Activated CD8-positive, alpha-beta T cell treated with anti-CD3 and anti-CD28 coated beads for 36 hours (primary cell): ENCODE measurements at regions of chr16 and their contacts with region 1.

Region 1: DNA sequence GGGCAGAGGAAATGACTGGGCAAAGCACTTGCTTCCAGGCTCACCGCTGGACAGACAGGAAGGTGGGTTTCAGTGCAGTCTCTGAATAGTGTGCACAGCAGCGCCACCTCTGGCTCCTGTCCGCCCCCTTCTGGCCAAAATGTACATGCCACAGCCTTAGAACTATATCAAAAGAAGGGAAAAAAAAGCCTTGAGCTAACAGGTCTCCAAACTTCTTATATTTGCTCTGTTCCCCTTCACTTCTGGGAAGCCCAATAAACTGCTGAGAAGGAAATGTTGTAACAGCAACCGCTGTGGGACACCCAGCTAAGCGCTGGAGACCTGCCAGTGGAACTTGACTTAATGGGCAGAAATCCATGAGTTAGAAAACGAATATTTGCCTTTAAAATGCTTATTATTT is 17.5 kb downstream of the COG7 start:
- DNase-seq: peak; percentile 85
- ATAC-seq: peak; percentile 94
- H3K4me3 Mint-ChIP-seq: no peak overlapping the region
- H3K27ac Mint-ChIP-seq: no peak overlapping the region
- H3K4me1 Mint-ChIP-seq: peaks cover 2% of the 10 kb centered on the region
- H3K27me3 Mint-ChIP-seq: no peaks in the 10 kb centered on the region
- CTCF ChIP-seq: peak; percentile 82

Region 2: DNA sequence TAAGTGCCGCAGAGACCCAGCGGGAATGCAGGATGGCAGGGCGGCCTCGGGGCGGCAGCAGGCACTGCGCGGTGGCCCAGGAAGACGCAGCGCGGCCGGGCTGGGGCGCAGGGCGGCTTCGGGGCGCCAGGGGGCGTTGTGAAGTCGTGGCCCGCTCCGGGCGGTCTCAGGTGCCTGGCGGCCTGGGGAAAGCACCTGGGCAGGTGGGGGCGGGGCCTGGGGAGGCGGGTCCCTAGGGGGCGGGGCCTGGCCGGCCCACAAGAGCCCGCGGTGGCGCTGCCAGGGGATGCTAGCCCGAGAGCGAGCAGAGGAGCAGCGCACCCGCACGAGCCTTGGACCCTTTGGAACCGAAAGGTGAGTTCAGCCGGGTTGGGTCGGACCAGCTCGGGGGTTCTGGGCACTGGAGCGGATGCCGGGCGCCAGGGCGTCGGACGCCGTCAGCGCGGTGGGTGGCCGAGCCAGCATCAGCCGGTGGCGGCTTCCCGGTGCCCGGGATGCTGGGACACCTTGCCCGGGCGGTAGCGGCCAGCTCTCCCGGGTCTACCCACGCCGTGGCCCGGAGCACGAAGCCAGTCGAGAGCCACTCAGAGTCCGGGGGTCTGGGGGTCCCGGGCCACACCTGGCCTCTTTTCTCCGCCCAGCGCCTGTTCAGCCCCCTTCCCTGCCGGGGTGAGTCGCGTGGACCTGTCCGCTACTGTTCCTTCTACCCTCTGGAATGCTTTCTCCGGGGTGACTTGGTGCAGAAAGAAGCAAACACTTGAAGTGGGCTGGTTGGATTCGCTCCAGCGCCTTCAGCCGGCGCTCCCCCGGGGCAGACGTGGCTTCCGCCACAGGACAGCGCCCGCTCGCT is 252.8 kb before region 1 on chr16 and contains the start of gene SCNN1G:
- CTCF ChIA-PET with region 1: interaction called, 113 read pairs
- POLR2A ChIA-PET with region 1: interaction called, 4 read pairs
- intact Hi-C with region 1: loop called (anchors 5 kb)
- DNase-seq: peak; percentile 82
- ATAC-seq: peak; percentile 100
- H3K4me3 Mint-ChIP-seq: peak within 1 kb of the TSS; percentile 22
- H3K27ac Mint-ChIP-seq: no peak within 1 kb of the TSS
- H3K4me1 Mint-ChIP-seq: peaks cover 7% of the 10 kb centered on the region
- H3K27me3 Mint-ChIP-seq: peaks cover 51% of the 10 kb centered on the region
- CTCF ChIP-seq: peak; percentile 90
- total RNA-seq, gene SCNN1G: not detected

Region 3: DNA sequence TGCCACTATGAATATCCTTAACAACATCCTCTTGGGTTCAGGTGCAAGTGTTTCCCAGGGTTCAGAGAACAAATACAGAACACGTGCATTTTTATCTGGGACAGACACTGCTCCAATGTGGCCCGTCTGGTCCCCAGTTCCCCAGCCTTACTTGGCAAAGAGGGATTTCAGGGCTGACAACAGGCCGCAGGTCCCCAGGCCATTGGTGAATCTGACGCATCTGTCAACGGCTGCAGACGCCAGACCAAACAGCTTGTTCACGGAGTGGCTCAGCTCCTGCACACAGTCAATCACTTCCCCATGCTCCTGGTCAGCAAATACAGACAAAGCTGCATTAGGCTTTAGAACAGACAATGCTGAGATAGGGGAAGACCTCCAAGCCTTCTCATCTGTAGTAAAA is 18.7 kb before region 1 on chr16:
- CTCF ChIA-PET with region 1: interaction called, 33 read pairs
- POLR2A ChIA-PET with region 1: no interaction called
- intact Hi-C with region 1: no loop called
- DNase-seq: no peak
- ATAC-seq: no peak
- H3K4me3 Mint-ChIP-seq: no peak overlapping the region
- H3K27ac Mint-ChIP-seq: no peak overlapping the region
- H3K4me1 Mint-ChIP-seq: no peaks in the 10 kb centered on the region
- H3K27me3 Mint-ChIP-seq: no peaks in the 10 kb centered on the region
- CTCF ChIP-seq: no peak

Region 4: DNA sequence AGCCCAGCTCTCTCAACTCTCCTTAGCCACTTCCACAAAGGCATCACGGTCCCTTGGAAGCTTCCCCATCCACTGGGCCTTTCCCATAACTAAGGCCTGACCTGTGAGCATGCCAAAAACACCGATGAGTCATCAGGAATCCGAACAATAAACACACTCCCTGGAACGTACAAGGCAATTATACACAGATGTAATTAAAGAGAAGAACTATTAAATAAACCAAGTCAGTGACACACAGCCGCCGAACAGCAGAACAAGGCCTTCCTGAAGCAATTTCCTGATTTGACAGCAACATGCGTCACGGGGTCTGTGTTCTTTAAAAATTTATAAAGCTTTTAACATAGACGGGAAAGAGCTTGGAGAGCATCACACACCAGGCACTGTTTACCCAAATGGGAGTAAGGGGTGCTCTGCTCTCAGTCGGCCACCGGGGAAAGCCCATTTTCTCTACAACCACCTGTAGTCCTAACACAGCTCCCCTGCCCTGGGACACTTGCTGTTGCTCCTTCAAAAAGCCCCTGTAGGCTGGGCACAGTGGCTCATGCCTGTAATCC is 11.9 kb before region 1 on chr16:
- CTCF ChIA-PET with region 1: interaction called, 44 read pairs
- POLR2A ChIA-PET with region 1: no interaction called
- intact Hi-C with region 1: no loop called
- DNase-seq: no peak
- ATAC-seq: no peak
- H3K4me3 Mint-ChIP-seq: no peak overlapping the region
- H3K27ac Mint-ChIP-seq: no peak overlapping the region
- H3K4me1 Mint-ChIP-seq: no peaks in the 10 kb centered on the region
- H3K27me3 Mint-ChIP-seq: no peaks in the 10 kb centered on the region
- CTCF ChIP-seq: no peak

Region 5: GRCh38 chr16:23452572-23453337 is 17.3 kb after region 1 on chr16 and contains the start of gene COG7:
- CTCF ChIA-PET with region 1: interaction called, 47 read pairs
- POLR2A ChIA-PET with region 1: interaction called, 3 read pairs
- intact Hi-C with region 1: no loop called
- DNase-seq: peak; percentile 91
- ATAC-seq: peak; percentile 95
- H3K4me3 Mint-ChIP-seq: peak within 1 kb of the TSS; percentile 86
- H3K27ac Mint-ChIP-seq: peak within 1 kb of the TSS; percentile 90
- H3K4me1 Mint-ChIP-seq: peaks cover 18% of the 10 kb centered on the region
- H3K27me3 Mint-ChIP-seq: no peaks in the 10 kb centered on the region
- CTCF ChIP-seq: no peak
- total RNA-seq, gene COG7: 16.4 to 16.7 TPM

Region 6: DNA sequence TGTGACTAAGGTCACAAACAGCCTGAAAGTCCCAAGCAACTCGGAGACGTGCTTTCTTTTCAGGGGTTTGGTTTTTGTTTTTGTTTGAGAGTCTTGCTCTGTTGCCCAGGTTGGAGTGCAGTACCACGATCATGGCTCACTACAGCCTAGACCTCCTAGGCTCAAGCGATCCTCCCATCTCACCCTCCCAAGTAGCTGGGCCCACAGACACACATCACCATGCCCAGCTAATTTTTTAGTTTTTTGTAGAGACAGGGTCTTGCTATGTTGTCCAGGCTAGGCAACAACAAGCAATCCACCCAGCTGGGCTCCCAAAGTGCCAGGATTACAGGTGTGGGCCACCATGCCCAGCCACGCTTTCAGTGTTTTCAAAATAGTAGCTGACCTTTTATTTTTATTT is 94.6 kb after region 1 on chr16:
- CTCF ChIA-PET with region 1: no interaction called
- POLR2A ChIA-PET with region 1: no interaction called
- intact Hi-C with region 1: no loop called
- DNase-seq: no peak
- ATAC-seq: no peak
- H3K4me3 Mint-ChIP-seq: no peak overlapping the region
- H3K27ac Mint-ChIP-seq: no peak overlapping the region
- H3K4me1 Mint-ChIP-seq: no peaks in the 10 kb centered on the region
- H3K27me3 Mint-ChIP-seq: no peaks in the 10 kb centered on the region
- CTCF ChIP-seq: no peak